ENCODE measurements at regions of chr1 and their contacts with region 1.

Region 1: DNA sequence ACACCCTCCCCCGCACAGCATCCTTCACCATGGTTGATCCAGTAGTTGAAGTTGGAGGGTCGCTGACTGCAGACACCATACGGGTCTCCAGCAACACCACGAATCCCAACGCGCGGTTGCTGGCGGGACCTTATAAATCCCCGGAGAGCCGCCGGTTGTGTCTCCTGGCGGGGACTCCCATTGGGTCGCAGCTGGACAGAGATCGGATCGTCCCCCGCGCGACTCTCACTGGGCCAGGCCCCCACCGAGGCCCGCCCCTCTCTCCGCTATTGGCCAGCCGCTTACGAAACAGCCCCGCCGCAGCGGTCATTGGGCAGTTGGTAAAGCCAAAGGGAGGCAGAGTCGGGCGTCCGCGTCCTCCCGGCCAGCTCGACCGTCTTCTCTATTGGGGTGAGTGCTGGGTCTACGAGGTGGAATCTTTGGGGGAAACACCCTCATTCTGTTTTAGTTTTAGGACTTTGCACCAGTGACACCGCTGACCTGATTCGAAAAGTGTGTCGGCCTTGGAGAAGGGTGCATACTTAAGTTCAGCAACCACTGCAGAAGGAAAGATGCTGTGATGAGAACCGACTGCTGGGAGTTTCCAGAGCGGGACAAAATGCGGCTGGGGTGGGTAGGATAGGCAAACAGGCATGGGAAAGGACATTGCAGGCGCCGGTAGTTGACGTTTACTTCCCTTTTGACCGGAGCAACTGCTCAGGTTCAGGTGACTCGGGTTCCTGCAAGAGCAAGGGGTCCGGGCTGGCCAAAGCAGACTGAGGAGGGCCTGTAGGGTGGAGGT is 27.3 kb downstream of the RABIF start:
- DNase-seq: peak; percentile 96 to 97
- H3K4me3 ChIP-seq: peak overlapping the region; percentile 97
- H3K4me3 Mint-ChIP-seq: peak overlapping the region; percentile 97
- H3K27ac Mint-ChIP-seq: peak overlapping the region; percentile 95
- H3K4me1 ChIP-seq: peaks cover 62% of the 10 kb centered on the region
- H3K4me1 Mint-ChIP-seq: peaks cover 37% of the 10 kb centered on the region
- H3K27me3 ChIP-seq: no peaks in the 10 kb centered on the region
- H3K27me3 Mint-ChIP-seq: no peaks in the 10 kb centered on the region
- CTCF ChIP-seq: no peak

Region 2: DNA sequence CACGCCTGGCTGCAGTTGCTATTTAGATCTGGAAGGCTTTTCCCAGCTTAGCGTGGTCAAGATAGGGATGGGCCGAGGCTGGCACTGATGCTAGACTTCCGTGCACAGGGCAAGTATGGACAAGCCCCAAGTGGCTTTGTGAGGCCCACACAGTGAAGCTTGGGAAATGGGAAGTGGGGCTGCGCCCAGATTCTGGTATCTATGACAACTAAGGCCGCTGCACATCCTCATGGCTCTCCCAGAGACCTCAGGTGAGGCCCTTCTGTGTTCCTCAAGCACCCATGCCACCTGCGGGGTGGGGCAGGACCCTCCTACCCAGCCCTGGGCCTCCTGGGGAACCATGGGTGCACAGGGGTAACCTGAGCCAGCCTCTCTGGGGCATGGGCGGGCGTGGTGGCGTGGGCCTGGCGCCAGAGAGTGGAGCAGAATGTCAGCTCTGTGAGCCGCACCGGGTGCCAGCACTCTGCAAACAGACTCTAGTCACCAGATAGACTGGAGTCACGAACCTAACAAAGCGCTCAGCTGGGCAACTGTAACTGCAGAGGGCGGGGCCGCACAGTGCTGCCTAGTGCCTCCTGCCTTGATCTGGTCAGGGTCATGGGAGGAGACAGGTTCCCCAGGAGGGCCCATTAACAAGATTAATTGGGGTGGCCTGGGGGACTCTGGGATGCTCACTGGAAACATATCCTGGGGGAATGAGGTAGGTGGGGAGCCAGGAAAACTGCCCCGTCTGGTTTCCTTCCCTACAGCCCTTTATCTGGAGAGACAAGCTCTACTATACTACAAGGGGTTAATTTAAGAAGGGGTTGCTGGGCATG is 804.8 kb before region 1 on chr1:
- CTCF ChIA-PET with region 1: no interaction called
- POLR2A ChIA-PET with region 1: no interaction called
- intact Hi-C with region 1: no loop called
- DNase-seq: peak in 1 of 2 experiments; percentile 73
- H3K4me3 ChIP-seq: no peak overlapping the region
- H3K4me3 Mint-ChIP-seq: no peak overlapping the region
- H3K27ac Mint-ChIP-seq: peak overlapping the region; percentile 26
- H3K4me1 ChIP-seq: peaks cover 30% of the 10 kb centered on the region
- H3K4me1 Mint-ChIP-seq: peaks cover 25% of the 10 kb centered on the region
- H3K27me3 ChIP-seq: no peaks in the 10 kb centered on the region
- H3K27me3 Mint-ChIP-seq: no peaks in the 10 kb centered on the region
- CTCF ChIP-seq: no peak

Region 3: DNA sequence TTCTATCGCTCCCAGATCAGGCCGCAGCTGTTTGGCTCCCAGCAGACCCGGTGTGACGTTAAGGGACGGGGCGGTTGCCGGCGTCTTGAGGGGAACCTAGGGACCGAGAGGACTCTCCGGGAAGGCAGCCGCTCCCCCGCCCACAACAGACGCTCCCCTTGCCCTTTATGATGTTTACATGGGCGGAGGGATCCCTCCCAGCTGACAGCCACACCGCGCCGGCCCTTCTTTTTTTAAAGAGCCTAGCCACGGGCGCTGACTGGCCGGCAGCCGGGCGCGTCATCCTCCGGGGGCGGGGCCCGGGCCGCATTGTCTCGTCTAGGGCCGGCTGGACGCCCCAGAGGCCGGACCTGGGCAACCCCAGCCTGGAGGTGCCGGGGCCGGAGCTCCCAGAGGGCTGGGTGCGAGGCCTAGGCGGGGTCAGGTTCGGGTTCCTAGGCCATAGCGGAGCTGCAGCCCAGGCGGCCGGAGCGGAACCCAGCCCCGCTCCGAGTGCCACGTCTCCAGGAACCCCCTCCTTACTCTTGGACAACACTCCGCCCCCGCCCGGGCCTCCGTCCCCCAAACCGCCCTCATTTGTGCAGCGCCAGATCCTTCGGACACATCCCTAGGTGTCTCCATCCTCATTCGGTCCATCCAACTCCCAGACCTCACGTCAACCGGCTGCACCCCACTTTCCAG is 50.9 kb before region 1 on chr1 and contains the start of gene PCAT6:
- CTCF ChIA-PET with region 1: no interaction called
- POLR2A ChIA-PET with region 1: interaction called, 10 read pairs
- intact Hi-C with region 1: loop called (anchors 1 kb)
- DNase-seq: peak; percentile 97
- H3K4me3 ChIP-seq: peak within 1 kb of the TSS; percentile 62
- H3K4me3 Mint-ChIP-seq: peak within 1 kb of the TSS; percentile 89
- H3K27ac Mint-ChIP-seq: peak within 1 kb of the TSS; percentile 53
- H3K4me1 ChIP-seq: peaks cover 30% of the 10 kb centered on the region
- H3K4me1 Mint-ChIP-seq: peaks cover 41% of the 10 kb centered on the region
- H3K27me3 ChIP-seq: no peaks in the 10 kb centered on the region
- H3K27me3 Mint-ChIP-seq: no peaks in the 10 kb centered on the region
- CTCF ChIP-seq: no peak
- total RNA-seq, gene PCAT6: 1.4 TPM in 1 of 2 replicates, not detected in the other

Region 4: DNA sequence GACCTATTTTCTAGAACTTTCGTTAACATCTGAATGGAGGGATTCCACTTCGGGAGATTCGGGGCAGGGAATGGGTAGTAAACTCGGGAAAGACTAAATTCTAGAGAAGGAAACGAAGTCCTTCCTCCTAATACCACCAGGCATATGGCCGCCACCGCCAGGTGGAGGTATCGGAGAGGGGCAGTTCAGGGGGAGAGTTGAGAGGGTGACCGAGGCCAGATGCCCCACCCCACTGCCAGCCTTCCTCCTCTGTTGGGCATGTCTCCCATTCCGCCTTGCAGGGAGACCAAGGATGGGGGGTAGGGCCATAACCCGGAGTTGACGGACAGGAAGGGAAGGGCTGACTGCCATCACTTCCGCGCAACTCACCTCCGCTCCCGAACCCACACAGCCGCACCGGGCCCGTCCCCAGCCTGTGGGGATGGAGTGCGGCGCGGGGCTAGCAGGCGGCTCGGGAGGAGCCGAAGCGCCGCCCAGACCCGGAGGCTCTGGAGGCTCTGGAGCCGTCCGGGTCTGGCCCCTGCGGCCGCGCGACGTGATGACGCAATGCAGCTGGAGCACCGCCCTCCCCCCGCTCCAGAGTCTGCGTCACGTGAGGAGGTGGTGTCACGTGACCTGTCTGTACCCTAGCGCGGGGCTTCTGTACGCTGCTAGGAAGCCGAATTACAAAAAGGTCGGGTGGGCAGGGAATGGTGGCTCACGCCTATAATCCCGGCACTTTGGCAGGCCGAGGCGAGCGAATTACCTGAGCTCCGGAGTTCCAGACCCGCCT is 65.3 kb after region 1 on chr1 and contains the start of gene KLHL12:
- CTCF ChIA-PET with region 1: interaction called, 5 read pairs
- POLR2A ChIA-PET with region 1: interaction called, 7 read pairs
- intact Hi-C with region 1: loop called (anchors 1 kb)
- DNase-seq: peak; percentile 97 to 98
- H3K4me3 ChIP-seq: peak within 1 kb of the TSS; percentile 73
- H3K4me3 Mint-ChIP-seq: peak within 1 kb of the TSS; percentile 97
- H3K27ac Mint-ChIP-seq: peak within 1 kb of the TSS; percentile 94
- H3K4me1 ChIP-seq: 0 out of 2 replicates have a peak, but pooled peaks cover 3% of the 10 kb centered on the region
- H3K4me1 Mint-ChIP-seq: no peaks in the 10 kb centered on the region
- H3K27me3 ChIP-seq: no peaks in the 10 kb centered on the region
- H3K27me3 Mint-ChIP-seq: no peaks in the 10 kb centered on the region
- CTCF ChIP-seq: peak; percentile 65 to 82
- total RNA-seq, gene KLHL12: 23.2 and 23.6 TPM in 2 replicates

Region 5: DNA sequence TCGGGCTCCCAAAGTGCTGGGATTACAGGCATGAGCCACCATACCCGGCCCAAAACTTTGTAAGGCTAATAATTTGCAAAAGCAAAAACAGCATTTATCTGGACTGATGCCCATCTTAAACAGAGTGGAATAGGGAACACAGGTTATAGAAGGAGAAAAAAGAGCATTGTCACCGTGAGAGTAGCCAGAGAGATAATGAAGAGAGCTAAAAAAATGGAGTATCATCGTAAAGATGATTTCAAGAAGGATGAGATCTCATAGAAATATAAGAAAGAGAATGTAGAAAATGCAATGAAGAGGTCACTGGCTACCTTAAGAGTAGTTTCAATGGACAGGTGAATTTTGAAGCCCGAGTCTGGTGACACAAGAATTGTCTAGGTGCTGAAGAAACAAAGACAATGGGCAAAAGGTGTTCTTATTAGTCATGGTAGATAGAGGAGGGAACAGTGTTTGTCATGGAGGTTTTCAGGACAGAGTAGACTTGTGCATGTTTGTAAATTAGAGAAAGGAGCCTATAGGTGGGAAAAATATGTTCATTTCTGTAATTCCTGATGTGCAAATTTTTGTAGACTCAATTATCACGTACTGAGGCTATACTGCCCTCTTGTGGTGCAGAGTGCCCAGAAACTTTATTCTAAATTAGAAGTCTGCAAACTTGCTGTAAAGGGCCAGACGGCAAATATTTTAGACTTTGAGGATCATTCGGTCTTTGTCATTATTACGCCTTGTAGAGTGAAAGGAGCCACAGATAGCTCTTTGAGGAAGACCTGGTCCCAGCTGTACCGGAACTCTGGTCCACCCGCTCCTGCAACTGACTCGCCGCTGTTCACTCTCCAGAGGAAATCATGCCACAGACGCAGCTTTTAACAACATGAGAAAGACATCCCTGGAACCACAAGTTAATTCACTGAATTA is 137.5 kb after region 1 on chr1:
- CTCF ChIA-PET with region 1: no interaction called
- POLR2A ChIA-PET with region 1: no interaction called
- intact Hi-C with region 1: loop called (anchors 5 kb)
- DNase-seq: peak in 1 of 2 experiments; percentile 67
- H3K4me3 ChIP-seq: no peak overlapping the region
- H3K4me3 Mint-ChIP-seq: no peak overlapping the region
- H3K27ac Mint-ChIP-seq: no peak overlapping the region
- H3K4me1 ChIP-seq: peaks cover 8% of the 10 kb centered on the region
- H3K4me1 Mint-ChIP-seq: peaks cover 7% of the 10 kb centered on the region
- H3K27me3 ChIP-seq: no peaks in the 10 kb centered on the region
- H3K27me3 Mint-ChIP-seq: peaks cover 7% of the 10 kb centered on the region
- CTCF ChIP-seq: peak; percentile 74 to 86